Activated CD4-positive, alpha-beta T cell treated with anti-CD3 and anti-CD28 coated beads for 36 hours (primary cell): ENCODE measurements at regions of chr15 and their contacts with region 1.

Region 1: GRCh38 chr15:70259028-70259424 is 161.3 kb upstream of the TLE3 start:
- DNase-seq: peak; percentile 54
- ATAC-seq: peak; percentile 17
- H3K4me3 Mint-ChIP-seq: peak overlapping the region; percentile 15
- H3K27ac Mint-ChIP-seq: peak overlapping the region; percentile 57
- H3K4me1 Mint-ChIP-seq: peaks cover 32% of the 10 kb centered on the region
- H3K27me3 Mint-ChIP-seq: peaks cover 3% of the 10 kb centered on the region

Region 2: GRCh38 chr15:69375151-69375790 is 883.8 kb before region 1 on chr15:
- CTCF ChIA-PET with region 1: no interaction called
- POLR2A ChIA-PET with region 1: no interaction called
- intact Hi-C with region 1: no loop called
- DNase-seq: no peak
- ATAC-seq: no peak
- H3K4me3 Mint-ChIP-seq: no peak overlapping the region
- H3K27ac Mint-ChIP-seq: no peak overlapping the region
- H3K4me1 Mint-ChIP-seq: no peaks in the 10 kb centered on the region
- H3K27me3 Mint-ChIP-seq: peaks cover 3% of the 10 kb centered on the region

Region 3: GRCh38 chr15:70091726-70092463 is 167.1 kb before region 1 on chr15:
- CTCF ChIA-PET with region 1: no interaction called
- POLR2A ChIA-PET with region 1: no interaction called
- intact Hi-C with region 1: loop called in 1 of 2 experiments (anchors 5 kb)
- DNase-seq: peak; percentile 39
- ATAC-seq: peak; percentile 16
- H3K4me3 Mint-ChIP-seq: peak overlapping the region; percentile 37
- H3K27ac Mint-ChIP-seq: no peak overlapping the region
- H3K4me1 Mint-ChIP-seq: peaks cover 74% of the 10 kb centered on the region
- H3K27me3 Mint-ChIP-seq: no peaks in the 10 kb centered on the region

Region 4: GRCh38 chr15:70140543-70141375 is 118.3 kb before region 1 on chr15:
- CTCF ChIA-PET with region 1: no interaction called
- POLR2A ChIA-PET with region 1: no interaction called
- intact Hi-C with region 1: loop called in 1 of 2 experiments (anchors 1 kb)
- DNase-seq: peak; percentile 55
- ATAC-seq: peak; percentile 32
- H3K4me3 Mint-ChIP-seq: peak overlapping the region; percentile 8
- H3K27ac Mint-ChIP-seq: peak overlapping the region; percentile 40
- H3K4me1 Mint-ChIP-seq: peaks cover 34% of the 10 kb centered on the region
- H3K27me3 Mint-ChIP-seq: peaks cover 21% of the 10 kb centered on the region

Region 5: DNA sequence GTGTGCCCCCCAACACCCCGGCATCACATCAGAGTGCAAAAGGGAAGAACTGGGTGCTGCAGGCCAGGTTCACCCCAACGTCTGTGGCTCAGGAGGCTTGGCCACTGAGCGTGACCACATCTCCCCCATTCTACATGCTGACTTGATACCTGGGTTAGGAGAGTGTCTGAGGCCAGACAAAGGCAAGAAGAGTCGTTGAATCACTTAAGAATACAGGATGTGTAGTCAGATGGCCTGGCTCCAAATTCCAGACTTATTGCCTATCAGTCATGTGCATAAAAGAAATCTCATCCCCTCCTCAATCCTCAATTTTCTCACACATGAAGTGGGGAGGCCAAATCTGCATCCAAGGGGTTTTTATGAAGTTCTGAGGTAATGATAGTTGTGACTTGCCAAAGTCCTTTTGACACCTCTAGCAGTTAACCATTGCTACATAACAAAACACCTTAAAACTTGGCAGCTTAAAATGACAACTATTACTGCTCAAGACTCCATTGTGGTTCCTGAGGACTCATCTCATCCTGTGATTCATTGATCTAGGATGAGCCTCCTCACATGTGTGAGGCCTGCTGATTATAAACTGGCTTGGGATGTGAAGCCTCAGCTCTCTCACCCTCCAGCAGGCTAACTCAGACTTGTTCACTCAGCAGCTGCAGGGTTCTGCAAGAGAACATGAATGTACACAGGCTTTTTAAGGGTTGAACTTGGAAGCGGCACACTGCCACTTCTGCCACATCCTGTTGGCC is 22.5 kb before region 1 on chr15:
- CTCF ChIA-PET with region 1: interaction called, 5 read pairs
- POLR2A ChIA-PET with region 1: no interaction called
- intact Hi-C with region 1: loop called (anchors 1 to 2 kb)
- DNase-seq: peak; percentile 53
- ATAC-seq: peak; percentile 83
- H3K4me3 Mint-ChIP-seq: no peak overlapping the region
- H3K27ac Mint-ChIP-seq: no peak overlapping the region
- H3K4me1 Mint-ChIP-seq: peaks cover 31% of the 10 kb centered on the region
- H3K27me3 Mint-ChIP-seq: peaks cover 2% of the 10 kb centered on the region

Region 6: DNA sequence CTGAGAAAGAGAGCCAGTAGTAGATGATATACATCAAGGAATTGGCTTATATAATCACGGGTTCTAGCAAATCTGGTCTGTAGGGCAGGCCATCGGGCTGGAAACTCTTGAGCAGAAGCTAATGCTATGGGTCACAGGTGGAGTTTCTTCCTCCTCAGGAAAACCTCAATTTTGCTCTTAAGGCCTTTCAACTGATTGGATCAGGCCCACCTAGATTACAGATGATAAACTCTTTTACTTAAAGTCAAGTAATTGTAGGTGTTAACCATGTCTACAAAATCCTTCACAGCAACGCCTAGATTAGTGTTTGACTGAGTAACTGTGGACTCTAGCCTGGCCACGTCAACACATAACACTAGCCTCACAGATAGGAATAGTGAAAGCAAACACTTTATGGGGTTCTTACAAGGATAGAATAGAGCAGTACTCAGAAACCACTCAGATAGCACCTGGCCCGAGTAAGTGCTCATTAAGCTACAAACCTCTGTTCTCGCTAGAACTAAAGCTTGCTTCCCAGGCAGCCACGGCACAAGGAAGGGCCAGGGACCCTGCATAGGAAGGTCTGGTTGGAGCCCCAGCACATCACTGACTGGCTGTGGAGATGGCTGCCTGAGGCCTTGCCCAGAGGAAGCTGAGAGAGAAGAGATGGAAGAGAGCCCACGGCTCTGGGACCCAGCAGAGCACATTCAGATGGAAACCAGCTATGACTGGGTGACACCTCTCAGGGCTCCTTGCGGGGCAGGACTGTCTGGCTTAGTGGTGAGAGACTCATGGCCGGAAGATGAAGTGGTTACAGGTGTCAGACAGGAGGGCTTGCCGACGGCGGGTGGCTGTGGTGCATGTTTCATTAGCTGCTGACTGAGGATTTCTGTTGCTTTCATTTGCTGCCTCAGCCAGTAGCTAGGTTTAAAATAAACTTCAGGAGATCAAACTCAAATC is 41.2 kb after region 1 on chr15:
- CTCF ChIA-PET with region 1: interaction called, 4 read pairs
- POLR2A ChIA-PET with region 1: no interaction called
- intact Hi-C with region 1: loop called in 1 of 2 experiments (anchors 1 kb)
- DNase-seq: peak; percentile 89
- ATAC-seq: peak; percentile 100
- H3K4me3 Mint-ChIP-seq: no peak overlapping the region
- H3K27ac Mint-ChIP-seq: no peak overlapping the region
- H3K4me1 Mint-ChIP-seq: peaks cover 11% of the 10 kb centered on the region
- H3K27me3 Mint-ChIP-seq: no peaks in the 10 kb centered on the region